ENCODE measurements at regions of chr3 and their contacts with region 1.

Region 1: GRCh38 chr3:50121416-50122032 is 32.8 kb downstream of the RBM5 start:
- DNase-seq: peak; percentile 69 to 87
- H3K4me3 ChIP-seq: no peak overlapping the region
- H3K4me1 ChIP-seq: no peaks in the 10 kb centered on the region
- H3K27me3 ChIP-seq: no peaks in the 10 kb centered on the region

Region 2: DNA sequence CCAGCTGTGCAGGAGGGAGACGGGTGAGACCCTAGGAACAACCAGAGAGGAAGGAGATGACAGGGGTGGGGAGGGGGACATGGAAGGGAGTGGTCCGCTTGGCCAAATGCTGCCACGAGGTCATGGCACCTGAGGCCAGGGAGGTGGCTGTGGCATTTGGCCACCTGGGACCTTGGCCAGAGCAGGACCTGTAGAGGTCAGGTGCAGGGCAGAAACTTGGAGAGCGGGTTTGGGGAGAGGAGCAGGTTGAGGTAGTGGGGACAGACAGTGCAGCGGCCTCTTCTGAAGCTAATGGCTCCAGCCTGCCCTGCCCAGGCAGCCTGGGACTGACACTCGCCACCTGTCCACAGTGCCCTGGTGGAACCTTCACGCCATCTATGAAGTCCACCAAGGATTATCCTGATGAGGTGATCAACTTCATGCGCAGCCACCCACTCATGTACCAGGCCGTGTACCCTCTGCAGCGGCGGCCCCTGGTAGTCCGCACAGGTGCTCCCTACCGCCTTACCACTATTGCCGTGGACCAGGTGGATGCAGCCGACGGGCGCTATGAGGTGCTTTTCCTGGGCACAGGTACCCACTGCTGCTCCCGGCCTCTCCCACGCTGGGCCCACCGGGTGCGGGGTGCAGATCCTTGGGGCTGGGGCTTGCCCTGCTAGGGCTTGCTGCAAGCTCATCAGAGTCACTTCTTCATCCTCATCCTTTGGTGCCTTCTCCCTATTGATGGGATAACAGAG is 62.9 kb after region 1 on chr3:
- in situ Hi-C with region 1: loop called (anchors 5 kb)
- DNase-seq: no peak
- H3K4me3 ChIP-seq: no peak overlapping the region
- H3K4me1 ChIP-seq: no peaks in the 10 kb centered on the region
- H3K27me3 ChIP-seq: no peaks in the 10 kb centered on the region

Measured in HAP-1 (cell line).